Transverse colon (tissue), 4 donors: ENCODE measurements at regions of chr17 and their contacts with region 1.

Region 1: DNA sequence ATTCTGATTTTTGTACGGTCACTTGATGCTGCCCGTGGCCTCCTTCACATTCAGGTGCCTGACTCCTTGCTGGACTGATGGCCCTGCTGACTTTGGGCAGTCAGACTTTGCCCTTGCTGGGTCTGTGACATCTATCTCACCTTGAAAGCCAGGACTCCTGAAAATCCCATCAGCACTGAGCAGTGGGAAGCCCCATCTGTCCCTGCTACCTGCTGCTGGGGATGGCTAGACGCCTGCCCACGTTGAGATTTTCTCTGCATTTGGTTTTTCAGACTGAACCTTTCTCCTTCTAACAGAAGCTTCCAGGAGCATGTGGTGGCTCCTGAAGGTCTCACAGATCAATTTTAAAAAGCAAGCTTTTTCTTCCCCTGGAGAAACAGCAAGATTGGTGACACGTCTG is 10.2 kb upstream of the ZNF18 start:
- DNase-seq: no peak
- H3K4me3 ChIP-seq: no peak overlapping the region
- H3K27ac ChIP-seq: no peak overlapping the region
- H3K4me1 ChIP-seq: no peaks in the 10 kb centered on the region
- H3K27me3 ChIP-seq: no peaks in the 10 kb centered on the region
- CTCF ChIP-seq: no peak
- EP300 ChIP-seq: no peak
- POLR2A ChIP-seq: no peak

Region 2: GRCh38 chr17:12078791-12079190 is 71.3 kb after region 1 on chr17:
- in situ Hi-C with region 1: no loop called
- intact Hi-C with region 1: loop called (anchors 2 kb)
- DNase-seq: no peak
- H3K4me3 ChIP-seq: no peak overlapping the region
- H3K27ac ChIP-seq: no peak overlapping the region
- H3K4me1 ChIP-seq: no peaks in the 10 kb centered on the region
- H3K27me3 ChIP-seq: no peaks in the 10 kb centered on the region
- CTCF ChIP-seq: no peak
- EP300 ChIP-seq: no peak
- POLR2A ChIP-seq: no peak